ENCODE measurements at regions of chr1 and their contacts with region 1.

Region 1: GRCh38 chr1:205523891-205524793 is 19.7 kb downstream of the CDK18 start:
- DNase-seq: peak; percentile 85
- ATAC-seq: peak; percentile 62
- H3K4me3 Mint-ChIP-seq: no peak overlapping the region
- H3K27ac Mint-ChIP-seq: no peak overlapping the region
- H3K4me1 Mint-ChIP-seq: no peaks in the 10 kb centered on the region
- H3K27me3 Mint-ChIP-seq: no peaks in the 10 kb centered on the region
- CTCF ChIP-seq: peak; percentile 81

Region 2: GRCh38 chr1:205335643-205336091 is 188.5 kb before region 1 on chr1:
- CTCF ChIA-PET with region 1: interaction called, 40 read pairs
- POLR2A ChIA-PET with region 1: no interaction called
- intact Hi-C with region 1: no loop called
- DNase-seq: peak; percentile 84
- ATAC-seq: peak; percentile 92
- H3K4me3 Mint-ChIP-seq: no peak overlapping the region
- H3K27ac Mint-ChIP-seq: no peak overlapping the region
- H3K4me1 Mint-ChIP-seq: peaks cover 6% of the 10 kb centered on the region
- H3K27me3 Mint-ChIP-seq: peaks cover 6% of the 10 kb centered on the region
- CTCF ChIP-seq: peak; percentile 98

Region 3: GRCh38 chr1:205354259-205354904 is 169.8 kb before region 1 on chr1:
- CTCF ChIA-PET with region 1: interaction called, 57 read pairs
- POLR2A ChIA-PET with region 1: interaction called, 6 read pairs
- intact Hi-C with region 1: loop called (anchors 5 kb)
- DNase-seq: peak; percentile 82
- ATAC-seq: peak; percentile 82
- H3K4me3 Mint-ChIP-seq: no peak overlapping the region
- H3K27ac Mint-ChIP-seq: no peak overlapping the region
- H3K4me1 Mint-ChIP-seq: no peaks in the 10 kb centered on the region
- H3K27me3 Mint-ChIP-seq: peaks cover 2% of the 10 kb centered on the region
- CTCF ChIP-seq: peak; percentile 88

Region 4: GRCh38 chr1:205430696-205431305 is 93.3 kb before region 1 on chr1:
- CTCF ChIA-PET with region 1: interaction called, 11 read pairs
- POLR2A ChIA-PET with region 1: no interaction called
- intact Hi-C with region 1: no loop called
- DNase-seq: peak; percentile 70
- ATAC-seq: peak; percentile 87
- H3K4me3 Mint-ChIP-seq: peak overlapping the region; percentile 74
- H3K27ac Mint-ChIP-seq: no peak overlapping the region
- H3K4me1 Mint-ChIP-seq: peaks cover 7% of the 10 kb centered on the region
- H3K27me3 Mint-ChIP-seq: no peaks in the 10 kb centered on the region
- CTCF ChIP-seq: peak; percentile 82

Region 5: GRCh38 chr1:205504311-205504984 is 19.7 kb before region 1 on chr1 and contains the start of gene CDK18:
- CTCF ChIA-PET with region 1: interaction called, 17 read pairs
- POLR2A ChIA-PET with region 1: no interaction called
- intact Hi-C with region 1: no loop called
- DNase-seq: peak; percentile 68
- ATAC-seq: peak; percentile 78
- H3K4me3 Mint-ChIP-seq: peak within 1 kb of the TSS; percentile 73
- H3K27ac Mint-ChIP-seq: peak within 1 kb of the TSS; percentile 22
- H3K4me1 Mint-ChIP-seq: peaks cover 12% of the 10 kb centered on the region
- H3K27me3 Mint-ChIP-seq: no peaks in the 10 kb centered on the region
- CTCF ChIP-seq: no peak
- total RNA-seq, gene CDK18: 8.4 to 10.4 TPM

Region 6: DNA sequence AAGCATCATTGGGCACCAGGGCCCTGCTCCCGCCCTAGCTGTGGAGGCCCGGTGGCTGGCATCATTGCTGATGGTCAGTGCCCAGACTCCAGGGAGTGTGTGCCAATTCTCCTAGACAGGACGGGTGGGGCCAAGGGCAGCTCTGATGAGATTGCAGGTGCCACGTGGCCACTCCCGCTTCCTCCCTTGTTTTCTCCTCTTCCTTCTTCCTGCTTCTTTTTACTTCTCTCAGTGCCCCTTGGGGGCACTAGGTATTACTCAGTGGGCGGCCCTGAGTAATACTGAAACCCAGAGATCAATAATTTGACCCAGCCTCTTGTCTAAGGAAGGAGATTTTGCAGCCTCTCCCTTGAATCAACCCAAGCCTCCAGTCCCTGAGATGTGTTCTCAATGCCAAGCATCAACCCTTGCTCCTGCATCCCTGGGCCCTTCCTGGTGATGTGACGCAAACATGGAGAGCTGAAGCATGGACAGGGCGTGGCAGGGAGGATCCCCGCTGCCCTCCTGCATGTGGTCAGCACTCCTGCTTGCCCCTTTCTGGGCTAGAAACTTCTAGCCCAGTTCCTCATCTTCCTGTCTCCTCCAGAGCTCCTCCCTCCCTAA is 12.7 kb after region 1 on chr1:
- CTCF ChIA-PET with region 1: interaction called, 13 read pairs
- POLR2A ChIA-PET with region 1: no interaction called
- intact Hi-C with region 1: no loop called
- DNase-seq: peak; percentile 24
- ATAC-seq: peak; percentile 39
- H3K4me3 Mint-ChIP-seq: no peak overlapping the region
- H3K27ac Mint-ChIP-seq: no peak overlapping the region
- H3K4me1 Mint-ChIP-seq: peaks cover 6% of the 10 kb centered on the region
- H3K27me3 Mint-ChIP-seq: peaks cover 11% of the 10 kb centered on the region
- CTCF ChIP-seq: no peak

Measured in activated CD8-positive, alpha-beta T cell treated with anti-CD3 and anti-CD28 coated beads for 36 hours (primary cell).